ENCODE measurements at regions of chr1 and their contacts with region 1.

Region 1: DNA sequence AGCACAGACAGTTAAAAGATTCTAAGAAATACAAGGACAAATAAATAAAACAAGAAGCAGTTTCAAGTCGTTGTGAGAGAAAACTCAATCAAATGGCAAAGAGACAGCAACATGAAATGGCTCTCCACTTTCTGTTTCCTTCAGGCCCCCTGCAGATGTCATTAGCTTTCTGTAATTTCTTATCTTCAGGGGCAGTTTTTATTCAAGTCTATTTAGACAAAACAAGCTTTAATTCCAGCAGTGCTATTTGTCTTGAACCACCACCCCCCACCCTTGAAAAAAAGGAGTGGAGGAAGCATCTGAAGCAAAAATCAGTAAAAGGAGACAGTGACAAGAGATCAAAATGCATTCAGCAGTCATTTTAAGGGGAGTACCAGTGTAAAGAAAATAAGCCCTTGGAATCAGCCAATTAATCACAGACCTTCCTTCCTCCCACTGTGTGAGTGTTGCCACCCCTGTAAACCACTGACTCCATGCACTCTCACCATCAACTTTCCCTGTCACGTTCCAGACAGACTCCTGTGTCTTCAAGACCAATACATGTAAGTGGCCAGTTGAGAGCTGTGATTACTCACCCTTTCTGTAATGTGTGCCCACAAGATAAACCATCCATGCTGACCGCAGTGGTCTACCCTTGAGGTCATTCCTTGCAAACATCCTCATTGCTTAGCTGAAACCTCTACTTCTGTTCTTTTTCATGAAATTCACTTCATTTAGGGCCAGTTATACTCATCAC is 136.1 kb upstream of the HOOK1 start:
- DNase-seq: no peak
- ATAC-seq: no peak
- H3K4me3 ChIP-seq: no peak overlapping the region
- H3K27ac ChIP-seq: no peak overlapping the region
- H3K4me1 ChIP-seq: peaks cover 42% of the 10 kb centered on the region
- H3K27me3 ChIP-seq: no peaks in the 10 kb centered on the region
- CTCF ChIP-seq: no peak
- EP300 ChIP-seq: no peak
- POLR2A ChIP-seq: no peak
- RAD21 ChIP-seq: no peak

Region 2: GRCh38 chr1:59549903-59550302 is 128.8 kb before region 1 on chr1:
- CTCF ChIA-PET with region 1: no interaction called
- POLR2A ChIA-PET with region 1: no interaction called
- in situ Hi-C with region 1: loop called (anchors 10 kb)
- intact Hi-C with region 1: no loop called
- DNase-seq: peak; percentile 50
- ATAC-seq: no peak
- H3K4me3 ChIP-seq: no peak overlapping the region
- H3K27ac ChIP-seq: peak overlapping the region; percentile 39
- H3K4me1 ChIP-seq: peaks cover 50% of the 10 kb centered on the region
- H3K27me3 ChIP-seq: no peaks in the 10 kb centered on the region
- CTCF ChIP-seq: no peak
- EP300 ChIP-seq: peak in 1 of 2 experiments; percentile 71; a peak in 2 of 4 replicates
- POLR2A ChIP-seq: no peak
- RAD21 ChIP-seq: no peak

Measured in HepG2 (cell line).